ENCODE measurements at regions of chr20 and their contacts with region 1.

Region 1: GRCh38 chr20:50165684-50166554 is 12.4 kb upstream of the PEDS1 start:
- DNase-seq: peak; percentile 100
- H3K4me3 Mint-ChIP-seq: peak overlapping the region; percentile 72
- H3K27ac Mint-ChIP-seq: peak overlapping the region; percentile 98
- H3K4me1 Mint-ChIP-seq: peaks cover 18% of the 10 kb centered on the region
- H3K27me3 Mint-ChIP-seq: no peaks in the 10 kb centered on the region
- CTCF ChIP-seq: no peak

Region 2: GRCh38 chr20:49594143-49594930 is 571.6 kb before region 1 on chr20:
- CTCF ChIA-PET with region 1: no interaction called
- POLR2A ChIA-PET with region 1: no interaction called
- intact Hi-C with region 1: no loop called
- DNase-seq: peak; percentile 44
- H3K4me3 Mint-ChIP-seq: no peak overlapping the region
- H3K27ac Mint-ChIP-seq: no peak overlapping the region
- H3K4me1 Mint-ChIP-seq: peaks cover 26% of the 10 kb centered on the region
- H3K27me3 Mint-ChIP-seq: no peaks in the 10 kb centered on the region
- CTCF ChIP-seq: no peak

Region 3: DNA sequence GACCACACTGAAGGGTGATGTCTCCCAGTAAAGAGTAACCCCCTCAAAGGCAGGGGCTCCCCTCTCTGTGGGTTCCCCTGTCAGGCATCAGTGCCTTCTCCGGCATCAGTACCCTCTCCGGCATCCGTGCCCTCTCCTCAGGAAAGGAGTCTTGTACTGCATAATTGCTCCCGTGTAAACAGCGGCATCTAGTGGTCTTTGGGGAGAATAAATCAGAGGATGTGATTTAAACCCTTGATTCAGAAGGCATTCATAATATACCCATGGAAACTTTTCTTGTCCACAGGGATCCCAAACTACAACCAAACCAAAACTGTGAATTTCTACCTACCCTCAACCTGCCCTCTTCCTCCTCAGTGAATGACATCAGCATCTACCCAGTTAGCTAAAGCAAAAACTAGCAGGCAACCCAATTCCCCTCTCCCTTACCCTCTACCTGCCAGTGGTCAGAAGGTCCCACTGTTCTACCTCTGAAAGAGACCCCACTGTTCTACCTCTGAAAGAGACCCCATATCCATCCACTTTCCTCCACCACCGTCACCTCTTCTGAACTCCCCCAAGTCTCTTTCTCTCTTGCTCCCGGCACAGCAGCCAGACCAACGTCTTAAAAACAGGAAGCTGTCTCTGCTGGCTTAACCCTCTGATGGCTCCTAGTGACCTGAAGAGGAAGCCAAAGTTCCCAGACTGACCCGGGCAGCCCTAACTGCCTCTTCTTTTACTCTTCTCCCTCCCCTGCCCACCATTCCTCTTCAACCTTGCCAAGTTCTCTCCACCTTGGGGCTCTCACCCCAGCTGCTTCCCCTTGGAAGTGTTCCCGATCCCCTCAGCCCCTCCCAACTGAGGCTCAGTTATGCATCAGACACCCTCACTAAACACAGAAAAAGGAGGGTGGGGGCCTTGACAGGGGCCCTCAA is 80.2 kb before region 1 on chr20:
- CTCF ChIA-PET with region 1: interaction called, 19 read pairs
- POLR2A ChIA-PET with region 1: interaction called, 6 read pairs
- intact Hi-C with region 1: loop called (anchors 1 kb)
- DNase-seq: peak; percentile 75
- H3K4me3 Mint-ChIP-seq: peak overlapping the region; percentile 8
- H3K27ac Mint-ChIP-seq: peak overlapping the region; percentile 77
- H3K4me1 Mint-ChIP-seq: peaks cover 33% of the 10 kb centered on the region
- H3K27me3 Mint-ChIP-seq: no peaks in the 10 kb centered on the region
- CTCF ChIP-seq: peak; percentile 60

Region 4: GRCh38 chr20:50115591-50116372 is 50.1 kb before region 1 on chr20:
- CTCF ChIA-PET with region 1: interaction called, 696 read pairs
- POLR2A ChIA-PET with region 1: interaction called, 175 read pairs
- intact Hi-C with region 1: no loop called
- DNase-seq: peak; percentile 97
- H3K4me3 Mint-ChIP-seq: peak overlapping the region; percentile 74
- H3K27ac Mint-ChIP-seq: peak overlapping the region; percentile 89
- H3K4me1 Mint-ChIP-seq: peaks cover 39% of the 10 kb centered on the region
- H3K27me3 Mint-ChIP-seq: no peaks in the 10 kb centered on the region
- CTCF ChIP-seq: no peak

Region 5: DNA sequence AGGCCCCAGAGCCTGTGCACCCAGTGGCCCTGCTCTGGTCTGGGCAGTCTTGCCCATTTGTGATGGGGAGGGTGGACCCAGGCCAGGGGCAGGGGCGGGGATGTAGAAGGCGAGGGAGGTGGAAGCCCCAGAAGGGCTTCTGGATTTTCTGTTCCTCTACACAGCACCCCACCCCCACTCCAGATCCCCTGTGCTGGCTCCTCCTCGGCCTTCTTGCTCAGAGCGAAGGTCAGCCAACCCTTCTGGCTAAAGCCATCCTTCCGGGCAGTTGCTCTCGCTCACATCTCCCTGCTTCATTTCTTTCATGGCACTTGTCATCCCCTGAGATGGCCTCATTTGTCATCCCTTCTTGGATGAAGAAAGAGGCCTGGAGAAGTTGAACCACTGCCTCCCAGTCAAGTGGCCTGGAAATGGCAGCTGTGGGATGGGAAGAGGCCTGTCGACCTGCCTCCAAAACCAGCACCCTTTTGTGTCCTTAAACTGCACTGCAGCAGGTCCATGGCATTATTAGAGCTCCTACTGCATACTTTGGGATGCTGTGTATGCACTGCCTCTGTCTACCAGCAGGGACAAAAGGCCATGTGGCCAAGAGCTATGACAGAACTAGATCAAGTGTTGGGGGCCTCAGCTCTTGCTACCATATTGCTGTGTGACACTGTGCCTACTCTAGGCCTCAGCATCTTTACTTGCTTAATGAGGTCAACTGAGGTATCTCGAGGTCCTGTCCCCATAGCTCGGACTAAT is 32.3 kb before region 1 on chr20:
- CTCF ChIA-PET with region 1: interaction called, 16 read pairs
- POLR2A ChIA-PET with region 1: interaction called, 7 read pairs
- intact Hi-C with region 1: no loop called
- DNase-seq: no peak
- H3K4me3 Mint-ChIP-seq: no peak overlapping the region
- H3K27ac Mint-ChIP-seq: no peak overlapping the region
- H3K4me1 Mint-ChIP-seq: peaks cover 20% of the 10 kb centered on the region
- H3K27me3 Mint-ChIP-seq: no peaks in the 10 kb centered on the region
- CTCF ChIP-seq: no peak

Region 6: GRCh38 chr20:50146732-50147662 is 18.9 kb before region 1 on chr20:
- CTCF ChIA-PET with region 1: interaction called, 85 read pairs
- POLR2A ChIA-PET with region 1: interaction called, 375 read pairs
- intact Hi-C with region 1: no loop called
- DNase-seq: peak; percentile 81
- H3K4me3 Mint-ChIP-seq: peak overlapping the region; percentile 61
- H3K27ac Mint-ChIP-seq: peak overlapping the region; percentile 96
- H3K4me1 Mint-ChIP-seq: peaks cover 65% of the 10 kb centered on the region
- H3K27me3 Mint-ChIP-seq: no peaks in the 10 kb centered on the region
- CTCF ChIP-seq: no peak

Region 7: GRCh38 chr20:50179507-50180016 is 13.6 kb after region 1 on chr20:
- CTCF ChIA-PET with region 1: interaction called, 54 read pairs
- POLR2A ChIA-PET with region 1: no interaction called
- intact Hi-C with region 1: no loop called
- DNase-seq: no peak
- H3K4me3 Mint-ChIP-seq: no peak overlapping the region
- H3K27ac Mint-ChIP-seq: no peak overlapping the region
- H3K4me1 Mint-ChIP-seq: peaks cover 5% of the 10 kb centered on the region
- H3K27me3 Mint-ChIP-seq: no peaks in the 10 kb centered on the region
- CTCF ChIP-seq: no peak

Region 8: DNA sequence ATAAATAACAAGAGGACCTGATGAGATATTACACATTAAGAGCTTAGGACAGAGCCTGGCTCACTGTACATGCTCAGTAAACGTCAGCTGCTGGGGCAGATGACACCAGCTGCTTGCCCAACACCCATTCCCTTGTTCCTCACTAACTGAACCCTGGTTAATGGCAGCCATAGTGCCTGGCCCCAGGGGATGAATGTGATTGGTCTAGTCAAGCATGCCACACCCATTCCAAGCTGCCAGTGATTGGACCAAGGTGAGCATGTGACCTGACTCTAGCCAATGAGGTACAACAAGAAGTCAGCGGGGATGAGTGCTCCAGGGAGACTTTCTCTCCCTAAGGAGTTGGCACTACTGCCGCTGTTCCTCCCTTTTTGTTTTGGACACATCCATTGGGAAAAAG is 259.2 kb after region 1 on chr20:
- CTCF ChIA-PET with region 1: no interaction called
- POLR2A ChIA-PET with region 1: interaction called, 12 read pairs
- intact Hi-C with region 1: no loop called
- DNase-seq: no peak
- H3K4me3 Mint-ChIP-seq: no peak overlapping the region
- H3K27ac Mint-ChIP-seq: peak overlapping the region; percentile 92
- H3K4me1 Mint-ChIP-seq: peaks cover 48% of the 10 kb centered on the region
- H3K27me3 Mint-ChIP-seq: no peaks in the 10 kb centered on the region
- CTCF ChIP-seq: no peak